IMR-90 (cell line): ENCODE measurements at regions of chr12 and their contacts with region 1.

Region 1: DNA sequence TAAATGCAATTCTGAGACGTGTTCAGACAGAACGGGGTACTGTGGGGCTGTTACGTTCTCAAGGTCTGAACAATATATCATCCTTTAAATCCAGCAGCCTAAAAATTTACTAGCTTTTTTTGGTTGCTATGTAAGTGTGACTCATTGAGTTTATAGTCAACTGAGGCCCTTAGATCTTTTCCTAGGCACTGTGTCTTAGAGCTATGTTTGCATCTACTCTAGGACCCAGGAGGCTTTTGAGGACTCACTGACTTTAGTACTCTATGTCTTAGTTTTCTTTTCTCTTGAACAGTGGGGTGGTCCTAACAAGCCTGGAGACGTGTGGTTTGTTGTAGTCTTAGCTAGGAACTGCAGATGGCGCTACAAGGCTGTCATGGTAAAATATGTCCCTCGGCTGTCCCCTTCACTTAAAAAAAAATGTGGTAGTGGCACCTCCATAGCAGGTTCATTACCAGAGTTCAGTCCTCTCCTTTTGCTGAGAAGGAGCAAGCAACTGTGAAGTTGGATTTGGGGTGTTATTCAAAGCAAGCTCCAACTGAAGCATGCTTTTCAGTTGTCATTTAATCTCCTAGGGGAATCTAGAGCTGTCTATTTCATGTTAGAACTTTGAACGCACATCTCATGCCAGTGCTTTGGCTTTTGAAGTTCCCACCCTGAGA is 8.7 kb upstream of the SPATS2 start:
- DNase-seq: peak; percentile 65
- ATAC-seq: peak; percentile 91
- H3K4me3 ChIP-seq: no peak overlapping the region
- H3K27ac ChIP-seq: no peak overlapping the region
- H3K4me1 ChIP-seq: peaks cover 2% of the 10 kb centered on the region; the same call in 1 of the 2 replicates
- H3K27me3 ChIP-seq: no peaks in the 10 kb centered on the region
- CTCF ChIP-seq: peak; percentile 79
- POLR2A ChIP-seq: no peak
- RAD21 ChIP-seq: peak; percentile 83

Region 2: GRCh38 chr12:48690990-48691389 is 667.6 kb before region 1 on chr12:
- CTCF ChIA-PET with region 1: no interaction called
- POLR2A ChIA-PET with region 1: no interaction called
- dilution Hi-C with region 1: no loop called
- in situ Hi-C with region 1: no loop called
- intact Hi-C with region 1: no loop called
- DNase-seq: no peak
- ATAC-seq: no peak
- H3K4me3 ChIP-seq: no peak overlapping the region
- H3K27ac ChIP-seq: no peak overlapping the region
- H3K4me1 ChIP-seq: 0 out of 2 replicates have a peak, but pooled peaks cover 2% of the 10 kb centered on the region
- H3K27me3 ChIP-seq: no peaks in the 10 kb centered on the region
- CTCF ChIP-seq: no peak
- POLR2A ChIP-seq: no peak
- RAD21 ChIP-seq: no peak

Region 3: GRCh38 chr12:49288412-49288853 is 70.2 kb before region 1 on chr12:
- CTCF ChIA-PET with region 1: interaction called, 8 read pairs
- POLR2A ChIA-PET with region 1: no interaction called
- dilution Hi-C with region 1: no loop called
- in situ Hi-C with region 1: no loop called
- intact Hi-C with region 1: loop called (anchors 1 kb)
- DNase-seq: peak; percentile 55
- ATAC-seq: peak; percentile 88
- H3K4me3 ChIP-seq: no peak overlapping the region
- H3K27ac ChIP-seq: no peak overlapping the region
- H3K4me1 ChIP-seq: no peaks in the 10 kb centered on the region
- H3K27me3 ChIP-seq: peaks cover 18% of the 10 kb centered on the region
- CTCF ChIP-seq: peak; percentile 79
- POLR2A ChIP-seq: no peak
- RAD21 ChIP-seq: peak; percentile 74

Region 4: GRCh38 chr12:49331380-49332222 is 27.0 kb before region 1 on chr12:
- CTCF ChIA-PET with region 1: interaction called, 25 read pairs
- POLR2A ChIA-PET with region 1: no interaction called
- dilution Hi-C with region 1: no loop called
- in situ Hi-C with region 1: no loop called
- intact Hi-C with region 1: loop called (anchors 2 kb)
- DNase-seq: peak; percentile 76
- ATAC-seq: peak; percentile 98
- H3K4me3 ChIP-seq: no peak overlapping the region
- H3K27ac ChIP-seq: no peak overlapping the region
- H3K4me1 ChIP-seq: no peaks in the 10 kb centered on the region
- H3K27me3 ChIP-seq: peaks cover 24% of the 10 kb centered on the region
- CTCF ChIP-seq: peak; percentile 91
- POLR2A ChIP-seq: no peak
- RAD21 ChIP-seq: peak; percentile 93

Region 5: GRCh38 chr12:49336645-49337584 is 21.7 kb before region 1 on chr12 and contains the start of gene C1QL4:
- CTCF ChIA-PET with region 1: interaction called, 25 read pairs
- POLR2A ChIA-PET with region 1: no interaction called
- dilution Hi-C with region 1: no loop called
- in situ Hi-C with region 1: no loop called
- intact Hi-C with region 1: loop called (anchors 2 kb)
- DNase-seq: peak; percentile 52
- ATAC-seq: peak; percentile 97
- H3K4me3 ChIP-seq: peak within 1 kb of the TSS; percentile 57
- H3K27ac ChIP-seq: no peak within 1 kb of the TSS
- H3K4me1 ChIP-seq: no peaks in the 10 kb centered on the region
- H3K27me3 ChIP-seq: peaks cover 70% of the 10 kb centered on the region
- CTCF ChIP-seq: peak; percentile 82
- POLR2A ChIP-seq: no peak
- RAD21 ChIP-seq: peak; percentile 33
- total RNA-seq, gene C1QL4: 0.18 and 0.28 TPM in 2 replicates

Region 6: DNA sequence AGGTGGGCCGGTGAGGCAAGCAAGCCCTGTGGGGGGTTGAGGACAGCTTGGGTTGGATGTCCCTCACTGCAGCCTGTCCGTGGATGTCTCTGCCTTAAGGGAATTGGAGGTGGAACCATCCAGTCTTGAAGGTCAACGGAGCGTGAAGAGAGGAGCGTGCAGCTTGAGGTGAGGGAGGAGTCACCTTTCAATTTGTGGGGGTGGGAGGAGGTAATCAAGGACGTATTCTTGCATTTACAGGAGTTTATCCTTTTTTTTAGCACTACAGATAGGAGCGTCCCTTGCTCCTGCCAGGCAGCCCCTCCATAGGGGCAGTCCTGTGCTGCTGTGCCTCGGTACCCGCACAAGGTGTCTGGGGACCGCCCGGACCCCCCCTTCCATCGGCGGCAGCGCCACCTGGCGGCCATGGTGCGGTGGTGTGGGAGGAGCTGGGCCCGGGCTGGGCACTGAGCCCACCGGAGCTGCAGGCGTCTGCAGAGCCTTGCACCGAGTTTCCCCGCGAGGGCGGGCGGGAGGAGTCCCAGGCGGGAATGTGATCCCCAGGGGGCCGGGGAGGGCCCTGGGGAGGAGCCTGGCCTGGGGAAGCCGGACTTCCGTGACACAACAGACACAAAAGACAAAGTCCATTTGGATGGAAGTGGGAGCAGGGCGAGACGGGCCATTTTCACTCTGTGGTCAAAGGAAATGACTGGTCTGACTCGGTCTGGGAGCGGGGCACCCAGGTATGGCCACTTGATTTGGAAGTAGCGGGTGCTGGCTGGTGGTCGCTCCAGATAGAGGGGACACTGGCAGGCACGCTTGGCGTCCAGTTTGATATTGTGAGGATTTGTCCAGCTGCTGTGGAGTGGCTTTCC is 11.0 kb before region 1 on chr12:
- CTCF ChIA-PET with region 1: interaction called, 19 read pairs
- POLR2A ChIA-PET with region 1: no interaction called
- dilution Hi-C with region 1: no loop called
- in situ Hi-C with region 1: no loop called
- intact Hi-C with region 1: no loop called
- DNase-seq: peak; percentile 89
- ATAC-seq: peak; percentile 89
- H3K4me3 ChIP-seq: peak overlapping the region; percentile 47
- H3K27ac ChIP-seq: peak overlapping the region; percentile 2; the same call in 1 of the 2 replicates
- H3K4me1 ChIP-seq: peaks cover 20% of the 10 kb centered on the region
- H3K27me3 ChIP-seq: peaks cover 42% of the 10 kb centered on the region
- CTCF ChIP-seq: peak; percentile 83
- POLR2A ChIP-seq: peak; percentile 74
- RAD21 ChIP-seq: peak; percentile 30; the same call in 1 of the 2 replicates

Region 7: GRCh38 chr12:49515266-49515665 is 156.7 kb after region 1 on chr12:
- CTCF ChIA-PET with region 1: interaction called, 46 read pairs
- POLR2A ChIA-PET with region 1: interaction called, 3 read pairs
- dilution Hi-C with region 1: loop called (anchors 25 kb)
- in situ Hi-C with region 1: no loop called
- intact Hi-C with region 1: loop called (anchors 1 kb)
- DNase-seq: peak; percentile 90
- ATAC-seq: peak; percentile 86
- H3K4me3 ChIP-seq: no peak overlapping the region
- H3K27ac ChIP-seq: no peak overlapping the region
- H3K4me1 ChIP-seq: peaks cover 5% of the 10 kb centered on the region
- H3K27me3 ChIP-seq: no peaks in the 10 kb centered on the region
- CTCF ChIP-seq: no peak
- POLR2A ChIP-seq: no peak
- RAD21 ChIP-seq: no peak

Region 8: GRCh38 chr12:49580572-49581535 is 222.2 kb after region 1 on chr12:
- CTCF ChIA-PET with region 1: interaction called, 36 read pairs
- POLR2A ChIA-PET with region 1: interaction called, 7 read pairs
- dilution Hi-C with region 1: no loop called
- in situ Hi-C with region 1: no loop called
- intact Hi-C with region 1: loop called (anchors 1 kb)
- DNase-seq: peak; percentile 77
- ATAC-seq: peak; percentile 97
- H3K4me3 ChIP-seq: no peak overlapping the region
- H3K27ac ChIP-seq: no peak overlapping the region
- H3K4me1 ChIP-seq: peaks cover 2% of the 10 kb centered on the region; the same call in 1 of the 2 replicates
- H3K27me3 ChIP-seq: no peaks in the 10 kb centered on the region
- CTCF ChIP-seq: peak; percentile 84
- POLR2A ChIP-seq: no peak
- RAD21 ChIP-seq: peak; percentile 89